Tibial artery (tissue), 4 donors: ENCODE measurements at regions of chr19 and their contacts with region 1.

Region 1: DNA sequence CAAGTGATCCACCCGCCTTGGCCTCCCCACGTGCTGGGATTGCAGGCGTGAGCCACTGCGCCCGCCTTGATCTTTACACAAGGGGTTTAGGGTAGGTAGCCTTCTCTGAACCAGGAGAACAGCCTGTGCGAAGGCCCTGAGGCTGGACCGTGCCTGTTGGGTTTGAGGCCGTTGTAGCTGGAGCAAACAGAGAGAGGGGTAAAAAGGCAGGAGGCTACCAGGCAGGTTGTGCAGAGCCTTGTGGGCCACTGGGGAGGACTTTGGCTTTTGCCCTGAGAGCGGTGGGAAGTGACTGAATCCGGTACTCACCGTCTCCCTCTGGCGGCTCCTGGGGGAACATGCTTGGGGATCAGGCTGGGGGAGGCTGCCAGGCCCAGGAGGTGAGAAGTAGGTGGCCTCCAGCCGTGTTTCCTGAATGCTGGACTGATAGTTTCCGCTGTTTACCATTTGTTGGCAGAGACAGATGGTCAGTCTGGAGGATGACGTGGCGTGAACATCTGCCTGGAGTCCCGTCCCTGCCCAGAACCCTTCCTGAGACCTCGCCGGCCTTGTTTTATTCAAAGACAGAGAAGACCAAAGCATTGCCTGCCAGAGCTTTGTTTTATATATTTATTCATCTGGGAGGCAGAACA is 24.6 kb downstream of the SPC24 start:
- DNase-seq: peak; percentile 83 to 90
- H3K4me3 ChIP-seq: no peak overlapping the region
- H3K27ac ChIP-seq: peak overlapping the region; percentile 46 to 62
- H3K4me1 ChIP-seq: peaks cover 0 to 11% (median 4%) of the 10 kb centered on the region in 4 donors
- H3K27me3 ChIP-seq: no peaks in the 10 kb centered on the region
- CTCF ChIP-seq: peak; percentile 91 to 92

Region 2: GRCh38 chr19:10936661-10937084 is 194.3 kb before region 1 on chr19:
- intact Hi-C with region 1: loop called (anchors 5 kb)
- DNase-seq: no peak
- H3K4me3 ChIP-seq: no peak overlapping the region
- H3K27ac ChIP-seq: no peak overlapping the region
- H3K4me1 ChIP-seq: peaks cover 0 to 7% (median 2%) of the 10 kb centered on the region in 4 donors
- H3K27me3 ChIP-seq: no peaks in the 10 kb centered on the region
- CTCF ChIP-seq: peak; percentile 44 to 53

Region 3: DNA sequence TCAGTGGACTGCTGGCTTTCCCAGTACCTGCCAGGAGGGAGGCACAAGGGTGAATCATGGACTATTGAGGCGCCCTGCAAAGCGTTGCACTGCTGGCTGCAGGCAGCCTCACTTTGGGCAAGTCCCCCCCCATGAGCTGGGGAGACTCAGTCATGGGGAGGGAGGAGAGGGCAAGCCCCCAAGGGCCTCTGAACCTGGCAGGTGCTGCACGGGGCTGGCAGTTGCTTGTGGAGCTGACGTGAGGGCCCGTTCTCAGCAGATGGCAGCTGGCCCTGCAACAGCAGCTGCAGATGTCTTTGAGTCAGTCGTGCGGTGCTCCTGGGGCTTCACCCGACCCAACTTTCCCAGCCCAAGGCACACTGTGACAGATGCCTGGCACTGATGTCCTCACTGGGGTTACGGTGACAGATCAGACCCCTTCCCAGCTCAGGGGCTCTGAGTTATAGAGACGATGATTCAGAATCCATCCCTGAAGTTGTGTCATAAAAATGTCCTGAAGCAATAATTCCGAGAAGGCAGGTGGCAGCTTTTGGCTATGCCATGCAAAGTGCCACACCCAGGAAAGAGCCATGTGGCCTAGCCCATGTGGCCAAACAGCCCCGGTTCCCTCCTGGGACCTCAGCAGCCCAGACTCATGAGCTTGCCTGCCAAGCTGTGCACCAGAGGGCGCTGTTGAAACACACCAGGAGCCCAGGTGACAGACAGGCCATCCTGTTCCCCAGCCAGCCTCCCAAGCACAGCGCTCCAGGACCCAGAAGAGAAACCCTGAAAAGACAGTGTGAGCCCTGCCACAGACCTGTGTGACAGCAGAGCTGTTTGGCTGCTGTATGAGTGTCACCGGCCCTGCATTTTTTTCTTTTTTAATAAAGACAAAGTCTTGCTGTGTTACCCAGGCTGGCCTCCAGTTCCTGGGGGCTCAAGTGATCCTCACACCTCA is 95.2 kb before region 1 on chr19:
- intact Hi-C with region 1: loop called (anchors 2 kb)
- DNase-seq: peak; percentile 94 to 96
- H3K4me3 ChIP-seq: no peak overlapping the region
- H3K27ac ChIP-seq: peak overlapping the region; percentile 44 to 66
- H3K4me1 ChIP-seq: peaks cover 0 to 17% (median 12%) of the 10 kb centered on the region in 4 donors
- H3K27me3 ChIP-seq: no peaks in the 10 kb centered on the region
- CTCF ChIP-seq: peak; percentile 83 to 93